Dendritic cell treated with granulocyte-macrophage colony-stimulating factor and Interleukin-4, amounts not matched to agents 40 ng/mL and 50 ng/mL, for 4 days (primary cell): ENCODE measurements at regions of chr6 and their contacts with region 1.

Region 1: GRCh38 chr6:1396952-1397868 is 7.8 kb downstream of the FOXF2 start:
- H3K4me3 Mint-ChIP-seq: no peak overlapping the region
- H3K27ac Mint-ChIP-seq: no peak overlapping the region
- H3K4me1 Mint-ChIP-seq: no peaks in the 10 kb centered on the region
- H3K27me3 Mint-ChIP-seq: peaks cover 69% of the 10 kb centered on the region

Region 2: GRCh38 chr6:593139-593906 is 803.9 kb before region 1 on chr6:
- intact Hi-C with region 1: loop called (anchors 5 kb)
- H3K4me3 Mint-ChIP-seq: no peak overlapping the region
- H3K27ac Mint-ChIP-seq: no peak overlapping the region
- H3K4me1 Mint-ChIP-seq: no peaks in the 10 kb centered on the region
- H3K27me3 Mint-ChIP-seq: no peaks in the 10 kb centered on the region

Region 3: DNA sequence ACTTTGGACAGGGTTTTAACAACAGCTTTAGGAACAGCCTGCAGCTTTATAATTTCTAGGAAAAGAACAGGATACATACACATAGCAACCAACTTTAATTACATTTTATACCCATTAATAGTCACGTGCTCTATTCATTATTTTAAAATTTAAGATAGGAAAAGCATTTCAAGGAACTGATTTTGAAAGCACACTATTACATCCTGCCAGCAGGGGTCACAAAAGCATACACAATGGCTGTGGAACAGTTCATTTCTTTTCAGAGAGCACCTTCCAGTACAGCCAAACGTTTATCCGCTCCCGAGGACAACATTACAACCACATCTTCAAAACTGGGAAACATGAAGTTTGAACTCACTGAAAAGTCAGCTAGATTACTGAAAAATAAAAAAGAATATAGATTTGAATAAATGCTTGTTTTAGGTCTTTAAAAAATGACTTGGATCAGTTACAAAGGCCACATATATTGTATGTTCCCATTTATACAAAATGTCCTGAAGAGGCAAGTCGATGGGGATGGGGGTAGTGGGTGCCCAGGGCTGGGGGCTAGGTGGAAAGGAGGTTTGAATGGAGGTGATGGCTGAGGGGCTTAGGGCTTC is 599.6 kb before region 1 on chr6:
- intact Hi-C with region 1: loop called (anchors 1 kb)
- H3K4me3 Mint-ChIP-seq: no peak overlapping the region
- H3K27ac Mint-ChIP-seq: no peak overlapping the region
- H3K4me1 Mint-ChIP-seq: peaks cover 2% of the 10 kb centered on the region
- H3K27me3 Mint-ChIP-seq: peaks cover 62% of the 10 kb centered on the region

Region 4: GRCh38 chr6:1263039-1263849 is 134.0 kb before region 1 on chr6:
- intact Hi-C with region 1: loop called (anchors 5 kb)
- H3K4me3 Mint-ChIP-seq: no peak overlapping the region
- H3K27ac Mint-ChIP-seq: no peak overlapping the region
- H3K4me1 Mint-ChIP-seq: peaks cover 8% of the 10 kb centered on the region
- H3K27me3 Mint-ChIP-seq: peaks cover 48% of the 10 kb centered on the region